ENCODE measurements at regions of chr7 and their contacts with region 1.

Region 1: GRCh38 chr7:148962823-148963582 is 65.3 kb downstream of the PDIA4 start:
- DNase-seq: peak; percentile 81
- H3K4me3 Mint-ChIP-seq: peak overlapping the region; percentile 92
- H3K27ac Mint-ChIP-seq: peak overlapping the region; percentile 87
- H3K4me1 Mint-ChIP-seq: peaks cover 23% of the 10 kb centered on the region
- H3K27me3 Mint-ChIP-seq: no peaks in the 10 kb centered on the region

Region 2: GRCh38 chr7:148527707-148528168 is 435.3 kb before region 1 on chr7:
- CTCF ChIA-PET with region 1: interaction called, 3 read pairs
- POLR2A ChIA-PET with region 1: no interaction called
- intact Hi-C with region 1: loop called (anchors 1 kb)
- DNase-seq: peak; percentile 93
- H3K4me3 Mint-ChIP-seq: no peak overlapping the region
- H3K27ac Mint-ChIP-seq: no peak overlapping the region
- H3K4me1 Mint-ChIP-seq: peaks cover 6% of the 10 kb centered on the region
- H3K27me3 Mint-ChIP-seq: peaks cover 44% of the 10 kb centered on the region

Region 3: GRCh38 chr7:148633761-148634160 is 329.2 kb before region 1 on chr7:
- CTCF ChIA-PET with region 1: interaction called, 3 read pairs
- POLR2A ChIA-PET with region 1: no interaction called
- intact Hi-C with region 1: loop called (anchors 5 kb)
- DNase-seq: peak; percentile 49
- H3K4me3 Mint-ChIP-seq: no peak overlapping the region
- H3K27ac Mint-ChIP-seq: peak overlapping the region; percentile 5
- H3K4me1 Mint-ChIP-seq: peaks cover 22% of the 10 kb centered on the region
- H3K27me3 Mint-ChIP-seq: peaks cover 3% of the 10 kb centered on the region

Region 4: DNA sequence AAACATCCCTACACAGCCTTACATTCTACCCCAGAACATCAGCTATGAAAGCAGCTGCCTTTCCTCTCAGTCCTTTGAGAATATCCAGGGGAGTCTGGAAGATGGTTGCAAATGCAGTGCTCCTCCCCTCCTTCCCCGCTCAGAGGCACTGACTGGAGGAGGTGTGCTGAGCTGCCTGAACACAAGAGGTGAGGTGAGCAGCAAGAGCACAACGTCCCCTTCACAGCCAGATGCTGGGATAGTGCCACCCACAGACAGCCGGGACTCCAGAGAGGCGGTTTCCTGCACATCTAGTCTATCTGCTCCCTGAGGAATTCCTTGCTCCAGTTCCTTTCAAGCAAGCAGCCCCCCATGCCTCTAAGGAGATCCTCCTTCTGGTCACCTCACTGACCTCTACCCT is 153.1 kb before region 1 on chr7:
- CTCF ChIA-PET with region 1: interaction called, 13 read pairs
- POLR2A ChIA-PET with region 1: no interaction called
- intact Hi-C with region 1: loop called (anchors 5 kb)
- DNase-seq: no peak
- H3K4me3 Mint-ChIP-seq: no peak overlapping the region
- H3K27ac Mint-ChIP-seq: no peak overlapping the region
- H3K4me1 Mint-ChIP-seq: peaks cover 6% of the 10 kb centered on the region
- H3K27me3 Mint-ChIP-seq: no peaks in the 10 kb centered on the region

Region 5: GRCh38 chr7:148856891-148857290 is 106.1 kb before region 1 on chr7:
- CTCF ChIA-PET with region 1: interaction called, 11 read pairs
- POLR2A ChIA-PET with region 1: no interaction called
- intact Hi-C with region 1: loop called (anchors 2 kb)
- DNase-seq: peak; percentile 50
- H3K4me3 Mint-ChIP-seq: peak overlapping the region; percentile 40
- H3K27ac Mint-ChIP-seq: peak overlapping the region; percentile 82
- H3K4me1 Mint-ChIP-seq: peaks cover 39% of the 10 kb centered on the region
- H3K27me3 Mint-ChIP-seq: no peaks in the 10 kb centered on the region

Region 6: DNA sequence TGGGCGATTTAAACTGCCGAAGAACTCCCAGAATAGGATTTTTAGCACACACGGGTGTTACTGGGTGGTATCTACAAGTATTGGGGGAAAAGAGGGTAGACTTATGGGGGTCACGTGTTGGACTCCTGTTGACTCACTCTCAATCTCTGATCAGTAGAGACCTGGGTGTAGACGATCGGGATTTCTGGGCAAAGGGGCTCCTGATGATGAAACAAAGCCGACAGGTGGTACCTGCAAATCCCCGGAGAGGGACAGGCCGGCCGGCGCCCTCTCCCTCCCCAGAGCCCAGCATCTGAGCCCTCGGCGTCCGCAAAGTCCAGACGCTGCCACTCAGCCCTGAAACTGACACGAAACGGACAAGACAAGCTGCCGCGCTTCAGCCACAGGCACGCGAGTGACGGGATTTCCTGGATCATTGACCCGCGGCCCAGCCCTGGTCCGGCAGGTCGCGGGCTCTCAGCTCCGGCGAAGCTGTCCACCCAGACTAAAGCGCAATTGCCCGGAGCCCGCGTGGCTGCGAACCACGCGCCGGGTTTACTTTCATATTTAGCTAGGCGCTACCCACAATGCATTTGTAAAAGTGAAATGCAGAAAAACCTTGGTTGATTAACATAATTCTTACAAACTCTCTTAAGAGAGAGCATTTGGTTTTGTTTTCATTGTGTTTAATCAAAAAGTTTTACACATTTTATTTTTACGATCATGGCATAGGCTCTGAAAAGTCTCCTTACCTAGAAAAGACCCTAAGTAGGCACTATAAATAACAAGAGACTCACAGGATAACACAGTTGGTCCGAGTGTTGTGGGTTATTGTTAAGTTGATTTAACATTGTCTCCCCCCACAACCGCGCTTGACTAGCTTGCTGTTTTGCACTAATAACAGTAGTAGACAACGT is 22.1 kb before region 1 on chr7:
- CTCF ChIA-PET with region 1: interaction called, 19 read pairs
- POLR2A ChIA-PET with region 1: no interaction called
- intact Hi-C with region 1: loop called (anchors 1 kb)
- DNase-seq: peak; percentile 70
- H3K4me3 Mint-ChIP-seq: peak overlapping the region; percentile 94
- H3K27ac Mint-ChIP-seq: peak overlapping the region; percentile 94
- H3K4me1 Mint-ChIP-seq: peaks cover 14% of the 10 kb centered on the region
- H3K27me3 Mint-ChIP-seq: no peaks in the 10 kb centered on the region

Measured in activated CD4-positive, alpha-beta memory T cell treated with anti-CD3 and anti-CD28 coated beads for 36 hours (primary cell).